ENCODE measurements at regions of chr10 and their contacts with region 1.

Region 1: GRCh38 chr10:125982260-125982948 is 86.0 kb downstream of the FANK1 start:
- DNase-seq: no peak
- ATAC-seq: peak; percentile 75
- H3K4me3 ChIP-seq: no peak overlapping the region
- H3K27ac ChIP-seq: no peak overlapping the region
- H3K4me1 ChIP-seq: no peaks in the 10 kb centered on the region
- H3K27me3 ChIP-seq: no peaks in the 10 kb centered on the region
- CTCF ChIP-seq: peak; percentile 67

Region 2: GRCh38 chr10:126041781-126042231 is 59.4 kb after region 1 on chr10:
- intact Hi-C with region 1: no loop called
- DNase-seq: peak; percentile 88
- ATAC-seq: peak; percentile 97
- H3K4me3 ChIP-seq: no peak overlapping the region
- H3K27ac ChIP-seq: peak overlapping the region; percentile 84
- H3K4me1 ChIP-seq: peaks cover 19% of the 10 kb centered on the region
- H3K27me3 ChIP-seq: no peaks in the 10 kb centered on the region
- CTCF ChIP-seq: no peak

Region 3: GRCh38 chr10:126504063-126504739 is 521.8 kb after region 1 on chr10:
- intact Hi-C with region 1: loop called (anchors 10 kb)
- DNase-seq: no peak
- ATAC-seq: peak; percentile 81
- H3K4me3 ChIP-seq: no peak overlapping the region
- H3K27ac ChIP-seq: no peak overlapping the region
- H3K4me1 ChIP-seq: no peaks in the 10 kb centered on the region
- H3K27me3 ChIP-seq: no peaks in the 10 kb centered on the region
- CTCF ChIP-seq: peak; percentile 67